ENCODE measurements at regions of chr2 and their contacts with region 1.

Region 1: GRCh38 chr2:67234439-67234838 is 162.7 kb upstream of the ETAA1 start:
- DNase-seq: no peak
- H3K4me3 ChIP-seq: no peak overlapping the region
- H3K27me3 ChIP-seq: no peaks in the 10 kb centered on the region
- CTCF ChIP-seq: peak; percentile 77

Region 2: DNA sequence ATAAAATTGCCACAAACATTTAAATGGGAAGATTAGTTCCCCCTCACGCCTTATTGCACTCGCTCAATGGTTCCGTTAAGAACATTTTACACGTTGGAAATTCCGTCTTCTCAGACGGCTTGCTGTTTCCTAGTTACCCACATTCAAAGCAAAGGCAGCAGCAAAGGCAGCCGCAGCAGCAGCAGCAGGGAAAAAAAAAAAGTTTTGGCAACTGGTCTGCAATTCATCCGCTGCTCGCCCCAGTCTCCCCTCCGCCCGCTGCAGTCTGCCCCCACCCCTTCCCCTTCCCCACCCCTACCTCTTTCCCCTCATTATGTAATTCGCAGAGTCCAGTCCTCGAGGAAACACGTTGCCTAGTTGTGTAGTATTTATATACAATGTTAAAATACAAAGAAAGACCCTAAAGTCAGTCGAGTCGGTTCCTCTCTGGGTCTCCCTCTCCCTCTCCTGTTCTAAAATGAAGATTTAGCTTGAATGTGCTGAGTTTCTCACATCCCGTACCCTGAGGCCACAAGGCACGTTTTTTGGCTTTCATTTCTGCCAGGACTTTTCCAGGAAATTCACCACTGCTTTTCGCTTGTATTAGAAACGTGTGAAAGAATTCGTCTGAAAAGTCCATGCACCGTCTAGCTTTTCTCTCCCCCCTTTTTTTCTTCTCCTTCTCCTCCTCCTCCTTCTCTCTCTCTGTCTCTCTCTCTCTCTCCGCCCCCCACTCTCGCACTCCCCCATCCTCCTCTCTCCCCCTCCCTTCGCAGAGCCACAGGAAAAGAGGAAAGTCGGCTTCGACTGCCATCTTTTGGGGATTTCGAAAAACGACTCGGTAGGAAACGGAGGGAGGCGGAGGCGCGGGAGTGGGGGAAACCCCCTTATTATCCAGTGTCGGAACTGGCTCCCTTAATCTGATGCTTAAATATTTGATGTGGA is 659.5 kb before region 1 on chr2:
- CTCF ChIA-PET with region 1: interaction called, 17 read pairs
- POLR2A ChIA-PET with region 1: no interaction called
- DNase-seq: no peak
- H3K4me3 ChIP-seq: peak overlapping the region; percentile 55
- H3K27me3 ChIP-seq: no peaks in the 10 kb centered on the region
- CTCF ChIP-seq: peak; percentile 59

Region 3: DNA sequence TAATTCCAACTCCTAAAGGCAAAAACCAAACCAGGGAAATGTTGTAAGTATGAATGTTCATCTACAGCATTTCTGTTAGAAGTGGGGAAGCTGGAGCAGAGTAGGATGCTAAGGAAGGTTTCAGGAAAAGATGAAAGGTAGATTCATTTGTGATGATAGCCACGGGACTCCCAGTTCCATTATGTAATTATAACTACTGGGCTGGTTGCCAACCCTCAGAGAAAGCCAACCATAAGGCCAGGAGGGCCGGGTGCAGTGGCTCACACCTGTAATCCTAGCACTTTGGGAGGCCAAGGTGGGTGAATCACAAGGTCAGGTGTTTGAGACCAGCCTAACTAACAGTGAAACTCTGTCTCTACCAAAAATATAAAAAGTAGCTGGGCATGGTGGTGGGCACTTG is 126.2 kb before region 1 on chr2:
- CTCF ChIA-PET with region 1: no interaction called
- POLR2A ChIA-PET with region 1: no interaction called
- DNase-seq: no peak
- H3K4me3 ChIP-seq: no peak overlapping the region
- H3K27me3 ChIP-seq: no peaks in the 10 kb centered on the region
- CTCF ChIP-seq: no peak

Region 4: GRCh38 chr2:67259581-67260342 is 25.3 kb after region 1 on chr2:
- CTCF ChIA-PET with region 1: no interaction called
- POLR2A ChIA-PET with region 1: no interaction called
- DNase-seq: peak; percentile 87
- H3K4me3 ChIP-seq: no peak overlapping the region
- H3K27me3 ChIP-seq: no peaks in the 10 kb centered on the region
- CTCF ChIP-seq: no peak

Region 5: DNA sequence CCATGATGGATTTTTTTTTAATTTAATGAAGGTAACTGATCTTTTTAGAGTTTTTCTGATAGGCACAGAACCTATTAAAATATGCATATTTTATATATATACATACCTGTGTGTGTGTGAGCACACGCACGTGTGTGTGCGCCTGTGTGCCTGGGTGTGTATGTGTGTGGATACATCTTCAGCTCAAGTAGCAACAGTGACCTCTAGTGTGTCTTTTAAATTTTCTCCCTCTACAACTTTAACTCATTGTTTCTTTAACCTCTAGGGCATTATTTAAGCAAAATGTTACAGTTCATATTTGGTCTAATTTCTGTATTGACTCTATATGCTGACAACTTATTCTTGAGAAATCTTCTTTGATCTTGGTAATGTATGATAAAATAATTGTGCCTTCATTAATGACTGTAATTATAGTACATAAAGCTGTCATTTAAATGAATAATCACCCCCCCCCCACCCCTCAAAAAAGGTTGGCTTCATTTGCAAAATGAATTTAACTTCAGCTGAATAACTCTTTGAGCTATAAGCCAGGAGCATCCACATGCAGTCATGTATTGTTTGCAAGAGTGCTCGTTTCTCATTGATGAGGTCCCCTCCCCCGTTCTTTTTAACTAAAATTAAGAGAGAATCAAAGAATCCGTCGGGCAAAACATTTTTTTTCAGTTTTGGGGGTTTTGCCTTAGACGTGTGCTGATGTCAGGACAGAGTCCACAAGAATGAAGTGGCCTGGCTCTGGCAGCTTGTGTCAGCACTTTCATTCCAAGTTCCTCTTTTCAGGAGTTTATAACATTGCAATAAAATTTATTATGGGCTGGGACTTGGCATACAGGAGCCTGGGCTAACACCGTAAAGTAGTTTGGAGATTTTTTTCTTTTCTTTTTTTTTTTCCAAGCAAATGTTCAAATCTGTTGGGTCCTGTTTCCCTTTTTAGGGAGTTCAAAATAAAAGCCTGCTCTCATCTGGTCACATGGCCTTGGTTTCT is 242.7 kb after region 1 on chr2:
- CTCF ChIA-PET with region 1: interaction called, 13 read pairs
- POLR2A ChIA-PET with region 1: no interaction called
- DNase-seq: peak; percentile 13
- H3K4me3 ChIP-seq: no peak overlapping the region
- H3K27me3 ChIP-seq: no peaks in the 10 kb centered on the region
- CTCF ChIP-seq: peak; percentile 61

Region 6: DNA sequence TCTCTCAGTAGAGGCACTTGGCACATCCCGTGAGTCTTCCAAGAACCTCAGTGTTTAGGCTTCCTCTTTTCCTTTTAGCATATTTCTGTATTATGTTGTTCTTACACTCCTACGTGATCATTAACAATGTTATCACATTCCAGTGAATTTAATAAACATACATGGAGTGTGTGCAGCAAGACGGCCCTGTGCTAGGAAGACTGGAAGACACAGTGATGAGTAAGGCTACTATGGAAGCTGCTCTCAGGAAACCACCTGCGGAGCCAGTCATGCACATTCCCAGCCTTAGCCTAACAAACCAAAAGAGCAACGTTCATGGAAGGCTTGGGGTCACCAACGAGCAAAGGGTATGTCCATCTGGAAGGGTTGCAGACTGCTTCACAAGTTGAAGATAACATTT is 266.1 kb after region 1 on chr2:
- CTCF ChIA-PET with region 1: no interaction called
- POLR2A ChIA-PET with region 1: no interaction called
- DNase-seq: no peak
- H3K4me3 ChIP-seq: no peak overlapping the region
- H3K27me3 ChIP-seq: no peaks in the 10 kb centered on the region
- CTCF ChIP-seq: no peak

Region 7: GRCh38 chr2:67840460-67841068 is 606.1 kb after region 1 on chr2:
- CTCF ChIA-PET with region 1: interaction called, 10 read pairs
- POLR2A ChIA-PET with region 1: no interaction called
- DNase-seq: no peak
- H3K4me3 ChIP-seq: no peak overlapping the region
- H3K27me3 ChIP-seq: no peaks in the 10 kb centered on the region
- CTCF ChIP-seq: peak; percentile 91